ENCODE measurements at regions of chr12 and their contacts with region 1.

Region 1: GRCh38 chr12:123436017-123436964 is at the start of gene RILPL2:
- DNase-seq: peak; percentile 98
- H3K4me3 Mint-ChIP-seq: peak within 1 kb of the TSS; percentile 99
- H3K27ac Mint-ChIP-seq: peak within 1 kb of the TSS; percentile 99
- H3K4me1 Mint-ChIP-seq: peaks cover 35% of the 10 kb centered on the region
- H3K27me3 Mint-ChIP-seq: no peaks in the 10 kb centered on the region
- total RNA-seq, gene RILPL2: 17.2 TPM in 2 replicates

Region 2: GRCh38 chr12:122888232-122888867 is 547.9 kb before region 1 on chr12:
- intact Hi-C with region 1: no loop called
- DNase-seq: peak; percentile 85
- H3K4me3 Mint-ChIP-seq: peak overlapping the region; percentile 77
- H3K27ac Mint-ChIP-seq: peak overlapping the region; percentile 91
- H3K4me1 Mint-ChIP-seq: peaks cover 55% of the 10 kb centered on the region
- H3K27me3 Mint-ChIP-seq: peaks cover 7% of the 10 kb centered on the region

Region 3: DNA sequence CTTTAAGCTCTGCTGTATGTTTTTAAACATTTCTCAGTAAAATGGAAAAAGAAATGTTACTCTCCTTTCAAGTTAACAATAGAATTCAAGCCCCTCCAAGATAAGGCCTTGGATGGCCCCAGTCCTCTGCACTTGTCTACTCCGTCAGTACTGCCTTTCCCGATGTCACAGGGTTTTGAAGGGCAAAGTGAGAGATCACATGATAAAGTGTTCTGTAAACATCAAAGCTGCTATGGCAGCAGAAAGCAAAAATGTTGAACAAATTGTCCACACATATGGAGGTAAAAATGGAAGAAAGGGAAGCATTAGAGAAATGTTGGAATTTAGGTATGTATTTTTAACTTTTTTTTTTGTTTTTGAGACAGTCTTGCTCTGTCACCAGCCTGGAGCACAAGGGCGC is 131.2 kb before region 1 on chr12:
- intact Hi-C with region 1: no loop called
- DNase-seq: no peak
- H3K4me3 Mint-ChIP-seq: no peak overlapping the region
- H3K27ac Mint-ChIP-seq: no peak overlapping the region
- H3K4me1 Mint-ChIP-seq: no peaks in the 10 kb centered on the region
- H3K27me3 Mint-ChIP-seq: no peaks in the 10 kb centered on the region

Region 4: DNA sequence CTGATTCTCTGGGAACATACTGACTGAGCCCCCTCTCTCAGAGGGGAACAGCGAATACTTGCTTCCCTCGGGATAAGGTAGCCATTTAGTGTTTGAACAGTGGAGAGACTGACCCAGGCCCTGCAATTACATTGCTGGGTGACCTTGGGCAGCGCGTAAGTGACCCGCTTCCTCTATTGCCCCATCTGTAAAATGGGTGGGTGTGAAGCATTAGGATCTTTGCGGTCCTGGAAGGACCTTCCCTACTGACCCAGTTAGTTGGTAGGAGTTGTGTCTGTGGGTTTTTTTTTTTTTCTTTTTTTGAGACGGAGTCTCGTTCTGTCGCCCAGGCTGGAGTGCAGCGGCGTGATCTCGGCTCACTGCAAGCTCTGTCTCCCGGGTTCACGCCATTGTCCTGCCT is 53.6 kb before region 1 on chr12:
- intact Hi-C with region 1: loop called (anchors 1 kb)
- DNase-seq: no peak
- H3K4me3 Mint-ChIP-seq: peak overlapping the region; percentile 49
- H3K27ac Mint-ChIP-seq: peak overlapping the region; percentile 15
- H3K4me1 Mint-ChIP-seq: peaks cover 9% of the 10 kb centered on the region
- H3K27me3 Mint-ChIP-seq: no peaks in the 10 kb centered on the region

Region 5: DNA sequence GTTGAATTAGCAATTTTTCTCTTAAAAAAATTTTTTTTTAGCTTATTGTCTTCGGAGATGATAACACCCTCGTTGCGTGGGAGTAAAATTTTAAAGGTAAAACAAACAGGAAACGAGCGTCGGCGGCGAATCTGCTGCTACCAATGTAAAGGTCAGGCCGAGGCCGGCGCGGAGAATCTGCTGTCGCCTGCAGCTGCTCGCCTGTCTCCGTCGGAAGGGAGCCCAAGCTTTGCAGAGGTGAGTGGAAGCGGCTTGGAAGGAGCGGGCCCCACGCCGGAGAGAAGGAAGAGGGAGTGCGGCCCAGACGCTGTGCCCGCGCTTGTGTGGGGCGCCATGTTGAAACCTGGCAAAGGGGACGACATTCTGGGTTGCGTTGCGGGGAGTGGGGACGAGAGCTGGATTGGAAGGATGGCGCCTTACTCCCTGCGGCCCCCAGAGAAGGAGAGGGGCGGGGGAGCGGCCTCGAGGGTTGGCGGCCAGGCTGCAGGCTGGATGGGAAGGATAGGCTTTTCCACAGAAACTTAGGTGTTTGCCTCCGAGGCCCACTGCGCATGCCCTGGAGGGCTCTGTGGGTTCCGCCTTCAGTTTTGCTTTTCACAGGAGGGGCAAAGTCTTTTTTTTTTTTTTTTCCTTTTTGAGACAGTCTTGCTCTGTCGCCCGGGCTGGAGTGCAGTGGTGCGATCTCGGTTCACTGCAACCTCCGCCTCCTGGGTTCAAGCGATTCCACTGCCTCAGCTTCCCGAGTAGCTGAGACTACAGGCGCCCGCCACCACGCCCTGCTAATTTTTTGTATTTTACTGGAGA is 21.9 kb after region 1 on chr12 and contains the start of gene SNRNP35:
- intact Hi-C with region 1: loop called (anchors 1 kb)
- DNase-seq: peak; percentile 95
- H3K4me3 Mint-ChIP-seq: peak within 1 kb of the TSS; percentile 100
- H3K27ac Mint-ChIP-seq: peak within 1 kb of the TSS; percentile 100
- H3K4me1 Mint-ChIP-seq: peaks cover 22% of the 10 kb centered on the region
- H3K27me3 Mint-ChIP-seq: no peaks in the 10 kb centered on the region
- total RNA-seq, gene SNRNP35: 30.6 and 33.4 TPM in 2 replicates

Measured in activated CD4-positive, alpha-beta T cell treated with anti-CD3 and anti-CD28 coated beads, Interleukin-2, amount 10 ng/mL, durations not matched to agents 24 days and 14 days (primary cell).